PC-9 (cell line): ENCODE measurements at regions of chr11 and their contacts with region 1.

Region 1: GRCh38 chr11:81005595-81005994 is 1564.8 kb upstream of the TENM4 start:
- DNase-seq: peak in 1 of 2 experiments; percentile 42
- H3K4me3 ChIP-seq: no peak overlapping the region
- H3K27ac ChIP-seq: no peak overlapping the region
- H3K4me1 ChIP-seq: no peaks in the 10 kb centered on the region
- H3K27me3 ChIP-seq: no peaks in the 10 kb centered on the region
- CTCF ChIP-seq: no peak

Region 2: DNA sequence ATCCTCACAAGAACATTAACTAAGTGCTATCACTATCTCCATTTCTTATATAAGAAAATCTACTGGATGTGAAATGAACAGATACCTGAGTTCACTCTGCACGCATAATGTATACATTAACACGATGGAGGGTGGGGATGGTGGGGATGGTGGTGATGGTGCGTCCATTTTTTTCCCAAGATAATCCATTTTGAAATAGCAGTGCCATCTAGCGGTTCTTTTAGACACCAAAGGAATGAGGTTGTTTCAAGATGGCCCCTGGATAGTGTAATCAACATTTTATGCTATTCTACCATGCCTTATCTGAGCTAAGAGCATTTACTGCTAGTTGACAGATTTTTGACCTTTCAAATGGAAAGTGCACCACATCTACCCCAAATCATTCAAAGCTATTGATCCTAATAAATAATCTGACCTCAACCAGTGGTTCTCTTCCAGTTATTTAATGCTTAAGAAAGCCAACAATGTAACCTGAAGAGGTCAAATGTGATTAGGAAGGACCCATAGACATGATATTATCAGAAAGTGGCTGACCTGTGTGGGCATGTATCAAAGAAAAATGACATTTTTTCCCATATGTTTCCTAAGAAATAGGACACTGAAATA is 850.1 kb before region 1 on chr11:
- CTCF ChIA-PET with region 1: no interaction called
- POLR2A ChIA-PET with region 1: no interaction called
- intact Hi-C with region 1: loop called (anchors 5 kb)
- DNase-seq: no peak
- H3K4me3 ChIP-seq: no peak overlapping the region
- H3K27ac ChIP-seq: no peak overlapping the region
- H3K4me1 ChIP-seq: no peaks in the 10 kb centered on the region
- H3K27me3 ChIP-seq: no peaks in the 10 kb centered on the region
- CTCF ChIP-seq: peak; percentile 67

Region 3: DNA sequence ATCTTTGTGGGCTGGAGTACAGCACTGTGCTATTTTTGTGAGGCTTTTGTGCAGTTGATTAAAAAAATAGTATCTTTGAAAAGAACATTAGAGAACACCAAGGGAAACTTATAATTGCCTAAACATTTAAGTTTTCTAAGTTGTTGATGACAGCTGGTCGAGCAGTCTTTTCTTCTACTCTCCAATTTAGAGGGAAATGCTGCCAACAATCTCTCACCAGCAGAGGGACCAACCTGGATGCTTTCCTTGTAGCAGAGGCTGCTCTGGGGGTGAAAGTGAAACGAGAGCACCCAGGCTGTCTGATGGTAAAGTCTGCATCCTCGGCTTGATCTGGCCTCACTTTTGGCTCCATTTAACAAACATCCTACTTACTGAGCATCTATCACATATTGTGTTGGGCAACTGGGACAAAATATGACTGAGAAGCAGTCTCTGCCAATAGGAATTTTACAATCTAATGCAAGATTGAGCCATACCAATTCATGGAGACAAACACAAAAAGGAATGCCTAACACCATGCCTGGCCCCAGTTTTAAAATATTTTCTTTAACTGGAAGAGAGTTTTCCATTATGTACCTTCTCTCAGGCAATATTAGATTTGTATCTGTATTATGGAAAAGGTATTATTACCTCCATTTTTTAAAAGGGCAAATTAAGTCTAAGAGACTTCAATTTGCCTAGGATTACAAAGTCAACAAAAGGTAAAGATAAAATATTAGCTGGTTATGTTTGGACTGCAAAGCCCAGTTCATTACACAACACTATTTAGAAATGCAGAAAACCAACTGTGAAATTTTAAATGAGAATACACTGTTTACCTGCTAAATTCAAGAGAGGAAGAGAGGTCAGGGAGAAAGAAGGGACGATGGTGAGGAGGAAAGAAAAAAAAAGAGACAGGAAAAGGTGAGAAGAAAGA is 278.0 kb before region 1 on chr11:
- CTCF ChIA-PET with region 1: no interaction called
- POLR2A ChIA-PET with region 1: no interaction called
- intact Hi-C with region 1: loop called (anchors 10 kb)
- DNase-seq: no peak
- H3K4me3 ChIP-seq: no peak overlapping the region
- H3K27ac ChIP-seq: no peak overlapping the region
- H3K4me1 ChIP-seq: no peaks in the 10 kb centered on the region
- H3K27me3 ChIP-seq: no peaks in the 10 kb centered on the region
- CTCF ChIP-seq: 0 out of 2 replicates have a peak, but pooled peaks have one; percentile 36

Region 4: GRCh38 chr11:82117362-82117761 is 1111.8 kb after region 1 on chr11:
- CTCF ChIA-PET with region 1: no interaction called
- POLR2A ChIA-PET with region 1: no interaction called
- intact Hi-C with region 1: no loop called
- DNase-seq: no peak
- H3K4me3 ChIP-seq: no peak overlapping the region
- H3K27ac ChIP-seq: no peak overlapping the region
- H3K4me1 ChIP-seq: no peaks in the 10 kb centered on the region
- H3K27me3 ChIP-seq: no peaks in the 10 kb centered on the region
- CTCF ChIP-seq: no peak